Activated T-helper 2 cell treated with anti-CD3 and anti-CD28 coated beads, Interferon-gamma antibody, Interleukin-2, Interleukin-4, amounts not matched to agents 10 μg/mL and 5 μg/mL and 100 μg/mL, durations not matched to agents 14 hours and 24 hours and 36 hours (primary cell): ENCODE measurements at regions of chr21 and their contacts with region 1.

Region 1: GRCh38 chr21:42107881-42108553 is 36.9 kb downstream of the UMODL1 start:
- DNase-seq: peak; percentile 58
- H3K4me3 Mint-ChIP-seq: no peak overlapping the region
- H3K27ac Mint-ChIP-seq: no peak overlapping the region
- H3K4me1 Mint-ChIP-seq: peaks cover 4% of the 10 kb centered on the region
- H3K27me3 Mint-ChIP-seq: peaks cover 5% of the 10 kb centered on the region

Region 2: GRCh38 chr21:41816220-41817165 is 291.5 kb before region 1 on chr21:
- intact Hi-C with region 1: loop called (anchors 2 kb)
- DNase-seq: peak; percentile 37
- H3K4me3 Mint-ChIP-seq: no peak overlapping the region
- H3K27ac Mint-ChIP-seq: no peak overlapping the region
- H3K4me1 Mint-ChIP-seq: no peaks in the 10 kb centered on the region
- H3K27me3 Mint-ChIP-seq: no peaks in the 10 kb centered on the region

Region 3: GRCh38 chr21:42028766-42029425 is 79.1 kb before region 1 on chr21:
- intact Hi-C with region 1: no loop called
- DNase-seq: no peak
- H3K4me3 Mint-ChIP-seq: no peak overlapping the region
- H3K27ac Mint-ChIP-seq: no peak overlapping the region
- H3K4me1 Mint-ChIP-seq: no peaks in the 10 kb centered on the region
- H3K27me3 Mint-ChIP-seq: peaks cover 8% of the 10 kb centered on the region

Region 4: DNA sequence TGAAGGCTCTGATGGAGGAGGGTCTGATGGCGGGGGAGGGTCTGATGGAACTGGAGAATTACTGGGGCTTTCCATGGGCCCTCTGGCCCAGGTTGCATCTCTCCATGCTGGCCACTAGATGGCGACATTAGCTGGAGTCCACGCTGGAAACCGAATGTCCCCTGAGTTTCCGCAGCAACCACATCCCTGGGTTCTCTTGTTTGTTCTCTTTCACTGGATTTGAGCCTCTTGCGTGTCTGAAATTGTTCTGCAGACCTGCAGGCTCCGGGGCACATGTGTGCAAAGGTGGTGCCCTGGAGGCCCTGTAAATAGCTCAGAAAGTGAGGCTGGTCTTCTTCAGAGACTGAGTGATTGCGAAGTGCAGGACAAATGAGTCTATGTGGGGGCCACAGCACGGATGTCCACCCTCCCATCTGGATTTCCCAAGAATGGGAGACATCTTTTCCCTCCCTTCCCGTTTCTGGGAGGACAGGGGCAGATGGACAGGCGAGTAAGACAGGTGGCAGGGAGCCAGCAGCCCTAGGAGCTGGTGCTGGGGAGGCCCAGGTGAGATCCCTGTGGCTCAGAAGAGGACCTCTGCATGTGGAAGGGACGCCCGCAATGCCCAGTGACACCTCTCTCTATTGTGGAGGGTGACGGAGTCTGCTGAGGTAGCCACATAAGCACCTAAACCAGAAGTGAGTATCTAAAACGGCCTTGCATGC is 37.7 kb after region 1 on chr21:
- intact Hi-C with region 1: no loop called
- DNase-seq: peak; percentile 58
- H3K4me3 Mint-ChIP-seq: no peak overlapping the region
- H3K27ac Mint-ChIP-seq: no peak overlapping the region
- H3K4me1 Mint-ChIP-seq: peaks cover 6% of the 10 kb centered on the region
- H3K27me3 Mint-ChIP-seq: peaks cover 3% of the 10 kb centered on the region